HEK293 (cell line): ENCODE measurements at regions of chr22 and their contacts with region 1.

Region 1: DNA sequence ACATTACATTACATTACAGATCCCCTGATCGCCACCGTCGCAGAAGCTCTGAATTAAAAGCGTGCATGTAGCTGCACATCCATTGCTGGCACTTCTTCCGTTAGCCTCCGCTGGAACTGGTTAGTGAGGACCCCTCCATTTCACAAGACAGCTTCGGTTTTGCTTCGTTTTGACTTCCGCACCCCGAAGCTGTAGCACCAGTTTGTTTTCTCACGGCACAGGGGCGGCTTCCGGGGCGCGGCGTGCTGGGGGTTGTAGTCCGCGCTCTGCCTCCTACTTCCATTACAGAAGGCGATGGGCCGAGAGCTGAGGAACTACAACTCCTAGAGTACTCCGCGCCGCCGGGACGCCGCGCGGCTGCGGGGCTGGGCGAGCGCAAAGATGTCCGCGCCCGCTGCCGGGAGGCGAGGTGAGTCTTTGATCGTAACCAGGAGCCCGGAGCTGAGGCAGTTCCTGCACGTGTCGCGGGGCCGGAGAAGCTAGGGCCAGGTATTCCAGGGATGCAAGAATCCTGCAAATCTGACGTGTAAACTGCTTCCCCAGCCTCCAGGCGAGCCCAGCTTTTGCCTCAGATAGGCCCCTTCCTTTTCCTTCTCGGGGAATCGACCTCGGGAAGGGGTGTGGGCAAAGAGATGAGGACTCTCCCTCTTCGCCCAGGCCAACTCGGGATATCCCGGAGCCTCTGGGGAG is at the start of gene PEX26:
- H3K4me3 ChIP-seq: peak within 1 kb of the TSS; percentile 96
- H3K27ac ChIP-seq: peak within 1 kb of the TSS; percentile 67
- H3K4me1 ChIP-seq: no peaks in the 10 kb centered on the region
- CTCF ChIP-seq: no peak

Region 2: GRCh38 chr22:17824457-17824856 is 253.3 kb before region 1 on chr22:
- CTCF ChIA-PET with region 1: interaction called, 279 read pairs
- POLR2A ChIA-PET with region 1: interaction called, 3 read pairs
- H3K4me3 ChIP-seq: no peak overlapping the region
- H3K27ac ChIP-seq: no peak overlapping the region
- H3K4me1 ChIP-seq: no peaks in the 10 kb centered on the region
- CTCF ChIP-seq: no peak

Region 3: DNA sequence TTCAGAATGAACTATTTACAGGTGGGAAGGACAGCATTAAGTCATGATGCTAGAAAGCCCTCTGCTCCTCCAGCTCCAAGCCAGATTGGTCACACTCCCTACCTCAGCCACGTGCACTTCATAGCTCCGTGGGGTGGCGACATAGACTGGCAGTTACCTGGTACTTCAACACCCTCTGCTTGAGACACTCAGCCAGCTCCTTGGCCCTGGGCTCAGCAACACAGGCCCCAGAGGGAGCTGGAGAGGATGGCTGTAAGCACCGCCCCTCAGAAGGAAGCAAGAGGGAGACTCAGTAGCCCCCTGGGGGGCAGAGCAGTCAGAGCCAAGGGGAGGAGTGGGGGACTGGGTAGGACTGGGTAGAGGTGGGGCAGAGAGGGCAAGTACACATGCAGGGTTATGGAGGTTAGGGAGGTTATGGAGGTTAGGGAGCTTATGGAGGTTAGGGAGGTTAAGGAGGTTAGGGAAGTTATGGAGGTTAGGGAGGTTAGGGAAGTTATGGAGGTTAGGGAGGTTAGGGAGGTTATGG is 201.4 kb before region 1 on chr22:
- CTCF ChIA-PET with region 1: interaction called, 19 read pairs
- POLR2A ChIA-PET with region 1: no interaction called
- H3K4me3 ChIP-seq: no peak overlapping the region
- H3K27ac ChIP-seq: no peak overlapping the region
- H3K4me1 ChIP-seq: no peaks in the 10 kb centered on the region
- CTCF ChIP-seq: 0 out of 2 replicates have a peak, but pooled peaks have one; percentile 24

Region 4: GRCh38 chr22:17917490-17917983 is 160.2 kb before region 1 on chr22:
- CTCF ChIA-PET with region 1: interaction called, 44 read pairs
- POLR2A ChIA-PET with region 1: no interaction called
- H3K4me3 ChIP-seq: no peak overlapping the region
- H3K27ac ChIP-seq: no peak overlapping the region
- H3K4me1 ChIP-seq: peaks cover 7% of the 10 kb centered on the region; the same call in 1 of the 2 replicates
- CTCF ChIP-seq: no peak

Region 5: DNA sequence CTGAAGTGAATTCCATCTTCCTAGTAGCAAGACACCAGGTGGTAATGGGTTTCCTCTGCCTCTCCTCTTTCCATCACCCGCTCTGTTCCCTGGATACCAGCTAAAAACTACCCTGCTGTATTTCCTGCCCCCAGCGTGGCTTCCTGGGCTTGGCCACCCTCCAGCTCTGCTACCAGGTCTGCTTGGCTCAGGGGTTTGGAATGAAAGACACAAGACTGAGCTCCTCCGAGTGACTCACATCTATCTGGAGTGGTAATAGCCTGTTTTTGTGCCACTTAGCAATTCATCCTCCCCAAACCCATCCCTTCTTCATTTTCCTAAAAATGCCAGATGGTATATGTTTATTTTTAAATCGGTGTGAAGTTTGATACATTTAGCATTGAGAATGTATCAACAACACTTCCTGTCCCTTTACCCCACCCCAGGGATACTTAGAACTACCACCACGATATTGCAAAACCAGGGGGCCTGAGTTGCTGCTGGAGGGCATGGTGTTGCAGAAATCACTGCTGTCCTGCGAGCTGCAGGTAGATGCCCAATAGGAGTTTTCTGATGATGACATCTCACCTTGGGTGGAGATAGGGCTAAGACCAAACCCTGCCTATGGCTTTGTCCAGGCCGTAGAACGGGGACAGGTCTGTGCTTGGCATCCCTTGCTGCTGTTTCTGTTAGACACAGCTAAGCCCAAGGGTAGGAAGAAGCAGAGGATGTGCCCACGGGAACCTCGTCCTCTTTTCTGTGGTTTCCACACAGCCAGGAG is 45.9 kb before region 1 on chr22:
- CTCF ChIA-PET with region 1: interaction called, 48 read pairs
- POLR2A ChIA-PET with region 1: interaction called, 6 read pairs
- H3K4me3 ChIP-seq: no peak overlapping the region
- H3K27ac ChIP-seq: no peak overlapping the region
- H3K4me1 ChIP-seq: peaks cover 3% of the 10 kb centered on the region; the same call in 1 of the 2 replicates
- CTCF ChIP-seq: no peak

Region 6: DNA sequence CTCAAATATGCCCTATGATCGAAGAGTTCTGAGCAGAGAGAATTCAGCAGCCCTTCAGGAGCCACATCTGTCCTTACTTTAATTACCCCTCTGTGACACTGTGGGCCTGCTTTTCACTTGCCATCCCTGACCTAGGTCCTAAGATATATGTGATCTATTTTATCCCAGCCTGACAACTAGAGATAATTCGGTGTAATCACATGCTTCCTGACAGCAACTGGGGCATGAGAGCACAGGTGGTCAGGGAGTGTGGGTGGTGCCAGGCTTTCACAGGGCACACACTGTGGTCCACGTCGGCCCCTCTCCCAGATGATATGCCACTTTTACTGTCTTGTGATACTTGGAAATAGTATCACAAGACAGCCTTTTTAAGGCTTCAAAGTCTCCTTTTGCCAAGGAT is 36.7 kb after region 1 on chr22:
- CTCF ChIA-PET with region 1: no interaction called
- POLR2A ChIA-PET with region 1: no interaction called
- H3K4me3 ChIP-seq: no peak overlapping the region
- H3K27ac ChIP-seq: no peak overlapping the region
- H3K4me1 ChIP-seq: no peaks in the 10 kb centered on the region
- CTCF ChIP-seq: no peak

Region 7: GRCh38 chr22:18152519-18152918 is 74.7 kb after region 1 on chr22:
- CTCF ChIA-PET with region 1: interaction called, 3 read pairs
- POLR2A ChIA-PET with region 1: interaction called, 13 read pairs
- H3K4me3 ChIP-seq: no peak overlapping the region
- H3K27ac ChIP-seq: no peak overlapping the region
- H3K4me1 ChIP-seq: no peaks in the 10 kb centered on the region; the same call in 1 of the 2 replicates
- CTCF ChIP-seq: no peak